ENCODE measurements at regions of chr18 and their contacts with region 1.

Region 1: DNA sequence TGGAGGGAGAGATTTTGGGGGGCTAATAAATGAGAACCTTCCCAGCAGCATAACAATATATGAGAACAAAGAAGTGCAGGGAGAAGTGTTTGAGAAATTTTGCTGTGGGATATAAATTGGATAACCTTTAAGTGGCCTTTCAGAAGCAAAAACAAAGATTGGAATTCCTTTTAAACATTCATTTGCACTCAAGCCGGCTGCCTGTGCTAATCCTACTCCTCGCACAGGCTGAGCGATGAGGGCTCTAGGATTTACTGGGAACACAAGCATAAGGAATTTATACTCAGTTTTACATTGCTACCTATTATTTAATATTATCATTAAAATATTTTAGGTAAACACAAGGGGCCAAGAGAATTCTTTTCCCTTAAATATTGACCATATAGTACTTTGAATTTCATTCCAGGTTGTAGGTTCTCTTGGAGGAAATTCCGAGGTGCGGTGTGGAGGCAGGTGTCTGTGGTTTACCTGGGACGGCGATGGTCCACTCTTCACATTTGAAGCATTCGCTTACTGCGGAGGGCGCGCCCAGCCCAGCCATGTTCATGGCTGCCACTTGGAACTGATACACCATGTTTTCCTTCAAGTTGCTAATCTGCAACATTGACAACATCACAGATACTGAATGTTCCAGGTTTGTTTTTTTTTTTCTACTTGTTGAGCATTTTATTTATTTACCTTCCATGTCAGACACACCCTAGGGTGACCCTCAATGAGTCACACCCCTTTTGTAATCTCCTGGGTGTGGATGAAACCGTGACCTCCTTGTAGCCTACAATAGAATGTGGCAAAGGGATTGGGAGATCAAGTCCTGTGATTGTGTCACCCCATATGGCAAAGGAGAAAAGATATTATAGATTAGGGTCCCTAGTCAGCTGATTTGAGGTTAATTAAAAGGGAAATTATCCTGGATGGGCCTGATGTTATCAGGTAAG is 100.1 kb downstream of the MYOM1 start:
- DNase-seq: no peak
- ATAC-seq: no peak
- H3K4me3 ChIP-seq: no peak overlapping the region
- H3K4me3 Mint-ChIP-seq: no peak overlapping the region
- H3K27ac ChIP-seq: no peak overlapping the region
- H3K27ac Mint-ChIP-seq: no peak overlapping the region
- H3K4me1 ChIP-seq: no peaks in the 10 kb centered on the region
- H3K4me1 Mint-ChIP-seq: no peaks in the 10 kb centered on the region
- H3K27me3 ChIP-seq: no peaks in the 10 kb centered on the region
- H3K27me3 Mint-ChIP-seq: no peaks in the 10 kb centered on the region
- CTCF ChIP-seq: no peak

Region 2: GRCh38 chr18:3081584-3081991 is 38.1 kb before region 1 on chr18:
- CTCF ChIA-PET with region 1: no interaction called
- POLR2A ChIA-PET with region 1: no interaction called
- intact Hi-C with region 1: loop called in 1 of 2 experiments (anchors 5 kb)
- DNase-seq: no peak
- ATAC-seq: no peak
- H3K4me3 ChIP-seq: no peak overlapping the region
- H3K4me3 Mint-ChIP-seq: no peak overlapping the region
- H3K27ac ChIP-seq: no peak overlapping the region
- H3K27ac Mint-ChIP-seq: no peak overlapping the region
- H3K4me1 ChIP-seq: no peaks in the 10 kb centered on the region
- H3K4me1 Mint-ChIP-seq: no peaks in the 10 kb centered on the region
- H3K27me3 ChIP-seq: no peaks in the 10 kb centered on the region
- H3K27me3 Mint-ChIP-seq: no peaks in the 10 kb centered on the region
- CTCF ChIP-seq: no peak

Measured in CD4-positive, alpha-beta T cell (primary cell).